Lower leg skin (tissue), 4 donors: ENCODE measurements at regions of chr1 and their contacts with region 1.

Region 1: DNA sequence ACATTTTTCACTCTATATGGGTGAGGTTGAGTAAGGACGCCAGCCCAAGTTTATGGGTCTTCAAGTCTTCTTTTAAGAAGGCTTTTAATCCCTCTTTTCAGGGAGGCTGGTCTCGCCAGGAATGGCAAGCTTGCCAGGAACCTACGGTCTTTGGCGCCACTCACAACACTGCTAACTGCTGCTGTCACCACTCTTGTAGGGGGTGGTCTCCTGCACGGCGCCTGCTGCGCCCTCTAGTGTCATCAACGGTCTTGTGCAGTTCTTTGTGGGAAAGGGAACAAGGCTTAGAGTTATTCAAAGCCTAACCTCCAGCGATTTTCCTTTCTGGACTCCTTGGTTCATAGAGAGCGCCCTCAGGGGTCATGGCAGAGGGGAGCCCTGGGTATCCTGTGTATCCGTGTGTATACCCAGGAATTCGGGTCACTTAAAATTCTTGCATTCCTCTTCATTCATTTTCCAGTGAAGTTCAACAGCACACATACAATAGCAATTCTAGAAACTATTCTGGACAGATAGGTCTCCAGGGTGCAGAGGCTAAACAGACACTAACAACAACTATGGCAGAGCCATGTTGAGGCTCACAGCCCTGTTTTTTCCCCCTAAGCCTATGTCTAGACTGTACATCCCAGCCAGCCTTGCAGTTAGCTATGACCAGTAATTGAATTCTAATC is 392.8 kb upstream of the CAMK1G start:
- DNase-seq: no peak
- H3K4me3 ChIP-seq: no peak overlapping the region
- CTCF ChIP-seq: no peak
- POLR2A ChIP-seq: no peak

Region 2: DNA sequence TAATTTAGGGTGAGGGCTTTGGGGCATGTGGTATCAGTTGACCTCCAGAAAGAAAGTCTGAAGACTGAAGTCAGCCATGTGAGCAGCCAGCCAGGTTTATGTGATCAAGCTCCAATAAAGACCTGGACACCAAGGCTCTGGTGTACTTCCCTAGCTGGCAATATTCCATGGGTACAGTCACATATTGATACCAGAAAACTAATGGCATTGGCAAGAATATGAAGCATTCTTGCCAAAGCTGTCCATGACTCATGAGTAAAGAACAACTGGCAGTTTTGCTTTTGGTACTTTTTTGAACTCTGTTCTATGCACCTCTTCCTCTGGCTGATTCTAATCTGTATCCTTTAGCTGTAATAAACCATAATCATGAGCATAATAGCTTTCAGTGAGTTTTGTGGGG is 22.5 kb before region 1 on chr1:
- intact Hi-C with region 1: loop called (anchors 1 kb)
- DNase-seq: no peak
- H3K4me3 ChIP-seq: no peak overlapping the region
- CTCF ChIP-seq: no peak
- POLR2A ChIP-seq: no peak

Region 3: GRCh38 chr1:210938416-210938925 is 1747.7 kb after region 1 on chr1:
- intact Hi-C with region 1: no loop called
- DNase-seq: no peak
- H3K4me3 ChIP-seq: no peak overlapping the region
- CTCF ChIP-seq: no peak
- POLR2A ChIP-seq: no peak